ENCODE measurements at regions of chr14 and their contacts with region 1.

Region 1: GRCh38 chr14:61025251-61026223 is 44.5 kb downstream of the SLC38A6 start:
- DNase-seq: peak; percentile 25 to 85 (median 63)

Region 2: DNA sequence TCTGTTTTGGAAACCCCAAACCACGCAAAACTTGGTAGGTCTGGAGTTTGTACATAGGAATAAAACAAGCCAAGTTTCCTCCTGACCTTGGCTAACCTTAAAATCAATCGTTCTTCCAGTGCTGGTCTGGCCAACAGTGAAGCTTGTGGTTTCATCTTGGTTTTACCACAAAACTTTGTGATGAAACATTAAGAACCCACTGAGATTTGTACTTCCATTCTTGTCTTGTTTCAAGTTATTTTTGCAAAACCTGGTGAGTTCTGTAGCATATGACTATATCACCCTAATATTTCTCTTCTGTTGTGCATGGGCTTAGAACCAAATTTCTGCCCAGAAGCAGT is 402.6 kb before region 1 on chr14:
- intact Hi-C with region 1: loop called (anchors 10 kb)
- DNase-seq: no peak

Region 3: GRCh38 chr14:60884134-60884533 is 141.4 kb before region 1 on chr14:
- intact Hi-C with region 1: no loop called
- DNase-seq: no peak

Region 4: GRCh38 chr14:61130512-61131260 is 105.1 kb after region 1 on chr14:
- intact Hi-C with region 1: no loop called
- DNase-seq: peak in 1 of 42 donors; percentile 5

Region 5: DNA sequence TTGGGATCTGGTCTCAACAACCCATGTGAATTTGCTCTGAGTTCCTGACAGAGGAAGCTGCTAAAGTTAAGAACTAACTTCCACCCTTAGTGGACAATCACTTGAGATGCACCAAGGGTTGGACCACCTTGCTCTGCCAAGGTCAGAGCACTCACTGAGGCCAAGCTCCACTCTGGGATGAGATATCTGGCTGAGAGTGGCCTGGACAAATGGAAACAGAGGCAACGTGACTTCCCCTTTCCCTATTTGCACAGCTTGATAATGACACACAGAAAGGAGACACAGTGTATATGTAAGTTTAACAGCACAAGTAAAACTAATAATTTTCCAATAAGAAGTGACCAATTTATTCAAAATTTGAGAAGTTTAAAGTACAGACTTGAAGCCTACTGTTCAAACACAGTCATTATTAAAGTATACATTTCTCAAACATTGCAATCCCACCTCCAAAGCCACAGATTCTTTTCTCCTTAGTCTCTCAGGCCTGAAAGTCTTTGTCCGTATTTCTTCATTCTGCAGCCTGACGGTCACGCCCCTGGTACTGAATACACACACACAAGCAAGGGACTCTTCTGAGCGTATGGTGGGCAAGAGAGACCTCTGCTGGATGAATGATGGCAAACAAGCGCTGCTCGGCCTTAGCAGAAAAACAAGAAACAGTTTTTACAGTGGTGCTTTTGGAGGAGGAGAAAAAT is 227.0 kb after region 1 on chr14:
- intact Hi-C with region 1: loop called (anchors 10 kb)
- DNase-seq: peak; percentile 20 to 87 (median 74)

Measured in head of caudate nucleus (tissue), 42 donors.